Activated CD4-positive, alpha-beta memory T cell treated with anti-CD3 and anti-CD28 coated beads, Interleukin-2, amount 10 ng/mL, durations not matched to agents 7 days and 5 days (primary cell): ENCODE measurements at regions of chr17 and their contacts with region 1.

Region 1: GRCh38 chr17:41801374-41802271 is 10.1 kb downstream of the P3H4 start:
- DNase-seq: peak; percentile 76
- H3K4me3 Mint-ChIP-seq: no peak overlapping the region
- H3K27ac Mint-ChIP-seq: no peak overlapping the region
- H3K4me1 Mint-ChIP-seq: peaks cover 7% of the 10 kb centered on the region
- H3K27me3 Mint-ChIP-seq: no peaks in the 10 kb centered on the region

Region 2: DNA sequence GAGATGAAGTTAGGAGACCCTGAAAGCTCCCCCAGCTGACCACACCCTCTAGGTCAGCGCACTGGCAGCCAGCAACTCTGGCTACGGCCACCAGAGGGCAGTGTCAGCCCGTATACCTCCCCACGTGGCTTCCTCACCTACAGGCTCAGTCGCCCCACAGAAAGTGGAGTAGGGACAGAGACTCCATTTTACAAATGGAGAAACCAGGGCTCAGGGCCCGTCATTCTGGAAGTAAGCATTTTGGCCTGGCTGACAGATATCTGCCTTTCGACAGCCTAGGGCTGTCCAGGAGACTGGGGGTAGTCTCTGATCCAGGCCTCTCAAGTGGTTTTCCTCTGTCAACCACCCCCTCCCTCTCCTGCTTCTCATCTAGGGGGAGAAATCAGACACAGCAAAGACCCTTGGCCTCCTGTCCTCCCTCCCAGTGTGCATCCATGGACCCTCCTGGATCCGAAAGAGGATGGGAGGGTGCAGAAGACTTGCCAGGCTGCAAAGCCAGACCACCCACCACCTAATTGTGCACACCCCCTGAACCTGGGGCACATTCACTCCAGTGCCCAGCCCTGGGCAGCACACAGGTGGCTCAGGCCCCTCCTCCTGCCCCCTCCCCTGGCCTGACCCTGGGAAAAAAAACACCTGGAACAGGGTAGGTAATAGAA is 63.4 kb before region 1 on chr17:
- CTCF ChIA-PET with region 1: interaction called, 19 read pairs
- POLR2A ChIA-PET with region 1: no interaction called
- DNase-seq: peak; percentile 84
- H3K4me3 Mint-ChIP-seq: no peak overlapping the region
- H3K27ac Mint-ChIP-seq: no peak overlapping the region
- H3K4me1 Mint-ChIP-seq: peaks cover 12% of the 10 kb centered on the region
- H3K27me3 Mint-ChIP-seq: peaks cover 27% of the 10 kb centered on the region

Region 3: DNA sequence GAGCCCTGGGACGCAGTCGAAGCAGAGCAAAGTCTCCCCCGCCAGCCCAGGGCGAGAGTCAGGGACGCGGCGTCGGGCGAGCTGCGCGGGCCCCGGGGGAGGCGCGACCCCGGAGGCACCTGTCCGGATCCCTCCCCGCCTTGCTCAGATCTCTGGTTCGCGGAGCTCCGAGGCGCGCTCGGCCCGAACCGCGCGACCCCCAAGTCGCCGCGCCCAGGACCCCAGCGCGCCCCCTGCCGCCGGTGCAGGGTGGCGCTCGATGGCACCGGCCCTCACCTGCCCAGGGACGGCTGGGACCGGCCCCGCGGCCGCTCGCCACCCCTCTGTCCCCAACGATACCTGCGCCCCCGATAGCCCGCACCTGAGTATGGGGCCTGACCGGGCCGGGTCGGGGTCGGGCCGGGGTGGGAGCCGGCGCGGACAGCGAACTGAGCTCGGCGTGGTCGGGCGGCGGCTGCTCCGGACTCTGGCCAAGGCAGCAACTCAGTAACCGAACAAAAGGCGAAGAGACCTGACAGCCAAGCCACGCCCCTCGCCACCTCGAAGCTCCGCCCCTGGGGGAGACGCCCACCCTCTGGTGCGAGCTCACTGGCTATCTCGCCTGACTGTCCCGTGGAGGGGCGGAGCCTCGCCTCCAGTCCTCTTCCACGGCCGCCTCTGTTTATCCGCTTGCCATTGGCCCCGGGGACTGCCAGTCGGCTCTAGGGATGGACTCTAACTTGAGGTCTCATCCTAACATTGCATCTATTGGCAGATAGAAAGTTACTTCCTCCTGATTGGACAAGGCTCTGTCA is 15.2 kb before region 1 on chr17 and contains the start of gene JUP:
- CTCF ChIA-PET with region 1: interaction called, 19 read pairs
- POLR2A ChIA-PET with region 1: interaction called, 3 read pairs
- DNase-seq: peak; percentile 88
- H3K4me3 Mint-ChIP-seq: peak within 1 kb of the TSS; percentile 44
- H3K27ac Mint-ChIP-seq: no peak within 1 kb of the TSS
- H3K4me1 Mint-ChIP-seq: peaks cover 22% of the 10 kb centered on the region
- H3K27me3 Mint-ChIP-seq: peaks cover 46% of the 10 kb centered on the region
- total RNA-seq, gene JUP: 0.35 to 0.45 TPM